ENCODE measurements at regions of chr6 and their contacts with region 1.

Region 1: GRCh38 chr6:43263314-43264178 is 20.3 kb downstream of the TTBK1 start:
- DNase-seq: peak; percentile 85
- ATAC-seq: peak; percentile 84

Region 2: GRCh38 chr6:43120944-43121913 is 142.3 kb before region 1 on chr6:
- intact Hi-C with region 1: no loop called
- DNase-seq: peak; percentile 80
- ATAC-seq: peak; percentile 83

Region 3: GRCh38 chr6:43221046-43221972 is 42.2 kb before region 1 on chr6:
- intact Hi-C with region 1: no loop called
- DNase-seq: no peak
- ATAC-seq: peak; percentile 21

Region 4: DNA sequence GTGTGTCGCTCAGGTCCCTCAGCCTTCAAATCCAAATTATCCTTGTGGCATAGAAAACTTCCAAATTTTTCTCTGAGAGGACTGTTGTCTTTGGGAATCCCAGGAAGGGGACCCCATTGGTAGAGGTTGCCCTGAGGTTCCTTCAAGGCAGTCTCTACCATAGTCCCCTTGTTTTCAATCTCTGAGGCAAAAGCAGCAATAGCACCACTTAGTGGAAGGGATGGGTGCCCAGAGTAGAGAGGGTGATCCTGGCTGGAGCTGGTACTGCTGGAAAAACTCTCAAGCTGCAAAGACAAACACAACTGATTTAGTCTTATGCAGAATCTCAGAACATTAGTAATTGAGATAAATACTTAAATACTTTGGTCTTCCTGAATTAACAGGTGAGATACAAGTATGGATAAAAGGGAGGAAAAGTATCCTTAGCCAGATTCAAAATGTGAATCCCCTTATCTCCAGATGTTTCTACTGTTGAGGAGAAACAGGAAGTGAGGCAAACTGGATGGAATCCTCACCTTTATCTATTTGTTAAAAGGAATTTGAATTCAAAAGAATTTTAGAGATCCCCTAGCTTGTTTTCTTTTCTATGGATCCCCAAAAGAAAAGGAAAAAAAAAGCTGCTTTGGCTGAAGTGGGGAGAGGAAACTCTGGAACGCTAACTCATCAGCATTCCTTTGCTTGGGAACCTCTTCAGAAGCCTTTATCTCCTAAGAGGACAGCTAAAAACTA is 92.5 kb after region 1 on chr6:
- intact Hi-C with region 1: loop called (anchors 5 kb)
- DNase-seq: no peak
- ATAC-seq: peak; percentile 80

Region 5: DNA sequence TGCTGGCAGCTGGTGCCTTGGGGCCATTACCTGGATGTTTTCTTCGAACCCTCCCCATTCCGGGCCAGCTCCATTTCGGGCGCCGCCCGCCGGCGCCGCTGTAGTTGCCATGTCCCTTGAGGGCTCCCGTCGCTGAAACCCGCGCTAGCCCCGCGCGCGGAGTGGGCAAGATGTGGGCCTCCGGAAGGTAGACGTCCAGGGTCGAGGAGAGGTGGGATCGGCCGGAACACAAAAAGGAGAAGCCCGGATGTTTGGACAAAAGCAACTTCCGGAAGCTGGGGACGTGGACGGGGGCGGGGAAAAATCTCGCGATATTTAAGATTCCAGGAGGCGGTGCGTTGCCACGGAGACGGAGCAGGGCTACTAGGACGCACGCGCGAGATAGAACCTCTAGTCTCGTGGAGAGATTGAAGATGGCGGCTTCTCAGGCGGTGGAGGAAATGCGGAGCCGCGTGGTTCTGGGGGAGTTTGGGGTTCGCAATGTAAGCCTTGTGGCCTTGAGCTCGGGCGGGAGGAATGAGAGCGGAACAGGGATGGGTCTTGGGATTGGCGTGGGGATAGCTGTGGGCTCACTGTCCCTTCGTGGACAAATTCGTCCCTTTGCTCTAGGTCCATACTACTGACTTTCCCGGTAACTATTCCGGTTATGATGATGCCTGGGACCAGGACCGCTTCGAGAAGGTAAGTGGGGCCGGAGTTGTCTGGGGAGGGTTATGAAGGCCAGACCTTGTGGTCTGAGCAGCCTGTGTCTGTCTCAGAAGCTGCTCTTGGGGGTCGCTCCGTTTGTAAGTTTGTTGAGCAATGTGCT is 253.4 kb after region 1 on chr6 and contains the starts of genes POLR1C and YIPF3:
- intact Hi-C with region 1: loop called (anchors 10 kb)
- DNase-seq: peak; percentile 98
- ATAC-seq: peak; percentile 96
- total RNA-seq, gene POLR1C: 15.6 TPM
- total RNA-seq, gene YIPF3: 64.0 TPM